Activated naive CD4-positive, alpha-beta T cell treated with anti-CD3 and anti-CD28 coated beads for 36 hours (primary cell): ENCODE measurements at regions of chrX and their contacts with region 1.

Region 1: DNA sequence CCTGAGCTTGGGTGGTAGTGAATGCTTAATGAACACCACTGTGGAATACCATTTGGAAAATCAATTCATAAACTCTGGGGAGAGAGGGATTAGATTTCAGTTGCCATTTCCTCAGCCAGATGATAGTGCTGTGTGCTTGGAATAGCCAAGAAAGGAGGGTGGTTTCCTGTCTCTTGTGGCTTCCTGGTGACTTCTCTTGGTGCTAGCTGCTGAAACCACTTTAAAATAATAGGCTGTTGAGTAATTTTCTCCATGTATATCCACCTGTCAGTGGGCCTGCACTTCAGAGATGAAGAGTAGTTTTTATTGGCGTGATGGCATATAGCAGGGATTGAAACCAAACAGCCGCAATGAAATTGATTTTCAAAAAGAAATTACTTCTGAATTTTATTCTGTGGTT is 11.8 kb downstream of the EDA start:
- DNase-seq: peak; percentile 25
- H3K4me3 Mint-ChIP-seq: no peak overlapping the region
- H3K27ac Mint-ChIP-seq: peak overlapping the region; percentile 59
- H3K4me1 Mint-ChIP-seq: peaks cover 33% of the 10 kb centered on the region
- H3K27me3 Mint-ChIP-seq: no peaks in the 10 kb centered on the region

Region 2: GRCh38 chrX:69510137-69510715 is 117.5 kb before region 1 on chrX:
- CTCF ChIA-PET with region 1: no interaction called
- intact Hi-C with region 1: no loop called
- DNase-seq: no peak
- H3K4me3 Mint-ChIP-seq: no peak overlapping the region
- H3K27ac Mint-ChIP-seq: no peak overlapping the region
- H3K4me1 Mint-ChIP-seq: peaks cover 4% of the 10 kb centered on the region
- H3K27me3 Mint-ChIP-seq: peaks cover 10% of the 10 kb centered on the region

Region 3: DNA sequence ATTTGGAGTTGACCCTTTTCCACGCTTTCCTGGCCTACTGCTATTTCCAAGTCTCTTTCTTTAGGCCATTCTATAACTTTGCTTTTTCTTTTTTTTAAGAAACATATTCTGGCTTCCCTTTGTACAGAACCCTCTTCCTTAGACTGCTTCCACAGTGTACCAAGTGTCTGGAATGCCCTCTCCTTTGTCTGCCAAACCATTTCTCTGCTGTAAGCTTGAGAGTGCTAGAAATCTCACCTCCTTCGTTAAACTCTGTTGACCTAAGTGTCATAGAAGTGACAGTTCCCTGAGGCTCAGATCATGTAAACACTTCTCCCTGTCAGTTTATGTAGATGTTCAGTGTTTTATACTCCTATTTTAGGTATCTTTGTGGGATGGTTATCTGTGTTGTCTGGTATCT is 96.6 kb after region 1 on chrX:
- CTCF ChIA-PET with region 1: no interaction called
- intact Hi-C with region 1: loop called (anchors 10 kb)
- DNase-seq: no peak
- H3K4me3 Mint-ChIP-seq: no peak overlapping the region
- H3K27ac Mint-ChIP-seq: no peak overlapping the region
- H3K4me1 Mint-ChIP-seq: peaks cover 12% of the 10 kb centered on the region
- H3K27me3 Mint-ChIP-seq: no peaks in the 10 kb centered on the region

Region 4: GRCh38 chrX:69808375-69808774 is 180.6 kb after region 1 on chrX:
- CTCF ChIA-PET with region 1: no interaction called
- intact Hi-C with region 1: loop called (anchors 2 kb)
- DNase-seq: peak; percentile 13
- H3K4me3 Mint-ChIP-seq: no peak overlapping the region
- H3K27ac Mint-ChIP-seq: no peak overlapping the region
- H3K4me1 Mint-ChIP-seq: peaks cover 11% of the 10 kb centered on the region
- H3K27me3 Mint-ChIP-seq: no peaks in the 10 kb centered on the region

Region 5: DNA sequence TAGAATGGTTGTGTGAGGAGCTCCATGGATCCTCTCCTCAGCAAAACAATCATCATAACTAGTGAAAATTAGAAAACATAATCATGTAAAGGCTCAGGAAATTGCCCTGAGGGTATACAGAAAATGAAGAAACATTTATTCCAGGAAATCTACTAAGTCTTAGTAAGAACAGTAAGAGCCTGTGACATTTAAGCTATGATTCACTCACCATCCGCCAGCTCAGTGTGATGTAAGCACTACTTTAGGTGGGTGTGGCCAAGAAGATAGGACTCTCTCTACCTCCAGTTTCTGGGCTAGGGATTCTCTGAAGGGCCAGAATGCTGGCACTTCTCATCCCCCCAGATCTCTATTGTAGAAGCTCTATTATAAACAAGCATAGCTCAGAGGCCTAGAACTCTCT is 964.3 kb after region 1 on chrX:
- CTCF ChIA-PET with region 1: no interaction called
- intact Hi-C with region 1: loop called (anchors 5 kb)
- DNase-seq: peak; percentile 63
- H3K4me3 Mint-ChIP-seq: no peak overlapping the region
- H3K27ac Mint-ChIP-seq: peak overlapping the region; percentile 36
- H3K4me1 Mint-ChIP-seq: peaks cover 12% of the 10 kb centered on the region
- H3K27me3 Mint-ChIP-seq: no peaks in the 10 kb centered on the region